ENCODE measurements at regions of chr1 and their contacts with region 1.

Region 1: GRCh38 chr1:206734499-206735142 is 36.0 kb upstream of the IL19 start:
- DNase-seq: peak in 1 of 2 experiments; percentile 94
- H3K4me3 ChIP-seq: no peak overlapping the region
- H3K27ac ChIP-seq: no peak overlapping the region
- H3K4me1 ChIP-seq: peaks cover 0 to 3% (median 0%) of the 10 kb centered on the region in 4 experiments; a peak in 2 of 7 replicates
- H3K27me3 ChIP-seq: no peaks in the 10 kb centered on the region
- CTCF ChIP-seq: peak; percentile 66 to 87 (median 86)
- EP300 ChIP-seq: no peak
- POLR2A ChIP-seq: no peak
- RAD21 ChIP-seq: peak; percentile 80 to 84

Region 2: DNA sequence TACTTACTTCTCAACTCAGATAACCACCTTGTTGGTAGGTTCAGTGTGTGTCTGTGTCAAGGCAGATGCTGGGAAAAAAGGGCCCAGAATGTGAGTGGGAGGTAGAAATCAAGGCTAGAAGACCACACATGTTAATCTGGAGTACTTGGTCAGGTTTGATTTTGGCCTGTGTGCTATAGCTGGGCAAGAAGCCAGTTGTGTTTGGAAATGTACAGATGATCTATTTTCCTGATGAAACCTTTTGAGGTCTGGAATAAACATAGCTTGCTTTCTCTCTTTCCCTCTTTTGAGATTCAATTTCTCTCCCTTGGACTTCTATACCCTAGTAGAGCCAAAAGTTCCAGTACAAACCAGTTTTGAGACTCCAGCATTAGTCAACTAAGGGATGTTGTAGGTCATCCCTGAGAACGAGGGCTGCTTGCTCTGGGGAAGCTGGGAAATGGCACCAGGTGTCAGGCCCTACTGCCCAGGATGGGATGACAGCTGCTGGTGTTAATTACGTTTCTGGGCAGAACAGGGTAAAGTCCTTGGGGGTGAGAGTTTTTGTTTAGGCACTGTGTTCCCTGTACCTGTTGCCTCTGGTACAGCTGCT is 34.1 kb before region 1 on chr1:
- CTCF ChIA-PET with region 1: interaction called, 17 read pairs
- POLR2A ChIA-PET with region 1: interaction called, 3 read pairs
- DNase-seq: no peak
- H3K4me3 ChIP-seq: no peak overlapping the region
- H3K27ac ChIP-seq: no peak overlapping the region
- H3K4me1 ChIP-seq: peaks cover 11 to 31% (median 24%) of the 10 kb centered on the region in 4 experiments
- H3K27me3 ChIP-seq: no peaks in the 10 kb centered on the region; a peak in 1 of 7 replicates
- CTCF ChIP-seq: no peak
- EP300 ChIP-seq: no peak
- POLR2A ChIP-seq: no peak
- RAD21 ChIP-seq: no peak

Region 3: GRCh38 chr1:206744683-206745082 is 10.1 kb after region 1 on chr1:
- CTCF ChIA-PET with region 1: interaction called, 24 read pairs
- POLR2A ChIA-PET with region 1: no interaction called
- DNase-seq: no peak
- H3K4me3 ChIP-seq: no peak overlapping the region
- H3K27ac ChIP-seq: no peak overlapping the region
- H3K4me1 ChIP-seq: no peaks in the 10 kb centered on the region
- H3K27me3 ChIP-seq: no peaks in the 10 kb centered on the region; a peak in 1 of 7 replicates
- CTCF ChIP-seq: no peak
- EP300 ChIP-seq: no peak
- POLR2A ChIP-seq: no peak
- RAD21 ChIP-seq: no peak

Region 4: DNA sequence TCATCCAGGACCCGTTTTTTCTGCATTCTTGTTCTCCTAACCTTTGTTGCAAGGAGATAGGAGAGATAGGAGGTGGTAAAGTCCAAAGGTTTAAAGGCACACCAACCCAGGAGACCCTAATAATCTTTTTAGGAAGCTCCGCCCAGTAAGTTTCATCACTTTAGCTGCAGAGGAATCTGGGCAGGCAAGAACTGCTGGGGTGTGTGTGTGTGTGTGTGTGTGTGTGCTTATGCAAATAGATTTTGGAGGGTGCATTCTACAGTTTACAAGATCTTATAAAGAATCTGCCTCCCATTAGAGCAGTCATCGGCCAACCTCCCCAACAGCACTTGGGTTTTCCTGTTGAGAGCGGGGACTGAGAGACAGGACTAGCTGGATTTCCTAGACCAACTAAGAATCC is 41.6 kb after region 1 on chr1:
- CTCF ChIA-PET with region 1: interaction called, 22 read pairs
- POLR2A ChIA-PET with region 1: no interaction called
- DNase-seq: no peak
- H3K4me3 ChIP-seq: no peak overlapping the region
- H3K27ac ChIP-seq: no peak overlapping the region
- H3K4me1 ChIP-seq: no peaks in the 10 kb centered on the region
- H3K27me3 ChIP-seq: no peaks in the 10 kb centered on the region
- CTCF ChIP-seq: no peak
- EP300 ChIP-seq: no peak
- POLR2A ChIP-seq: no peak
- RAD21 ChIP-seq: no peak

Region 5: DNA sequence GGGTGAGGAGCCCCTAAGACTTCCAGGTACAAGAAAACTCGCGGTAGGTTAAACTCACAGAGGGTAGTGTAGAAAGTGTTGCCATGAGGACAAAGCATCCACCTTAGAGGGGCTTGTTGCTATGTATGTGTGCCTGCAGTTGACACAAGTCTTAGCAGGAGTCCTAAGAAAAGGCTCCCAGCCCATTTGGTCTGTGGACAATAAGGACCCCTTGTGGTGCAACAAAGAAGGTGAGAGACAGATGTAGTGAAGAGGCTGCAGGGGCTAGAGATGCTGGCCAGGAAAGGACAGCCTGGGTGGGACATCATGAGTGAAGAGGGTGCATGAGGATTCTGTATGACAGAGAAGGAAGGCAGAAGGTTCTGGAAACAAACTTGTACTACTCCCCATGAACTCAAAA is 74.0 kb after region 1 on chr1:
- CTCF ChIA-PET with region 1: interaction called, 29 read pairs
- POLR2A ChIA-PET with region 1: no interaction called
- DNase-seq: no peak
- H3K4me3 ChIP-seq: no peak overlapping the region
- H3K27ac ChIP-seq: no peak overlapping the region
- H3K4me1 ChIP-seq: no peaks in the 10 kb centered on the region
- H3K27me3 ChIP-seq: no peaks in the 10 kb centered on the region
- CTCF ChIP-seq: peak; percentile 6 to 53 (median 44)
- EP300 ChIP-seq: no peak
- POLR2A ChIP-seq: no peak
- RAD21 ChIP-seq: peak; percentile 62 to 73

Region 6: GRCh38 chr1:206850401-206850800 is 115.8 kb after region 1 on chr1:
- CTCF ChIA-PET with region 1: no interaction called
- POLR2A ChIA-PET with region 1: no interaction called
- DNase-seq: no peak
- H3K4me3 ChIP-seq: no peak overlapping the region
- H3K27ac ChIP-seq: no peak overlapping the region
- H3K4me1 ChIP-seq: no peaks in the 10 kb centered on the region
- H3K27me3 ChIP-seq: no peaks in the 10 kb centered on the region
- CTCF ChIP-seq: no peak
- EP300 ChIP-seq: no peak
- POLR2A ChIP-seq: no peak
- RAD21 ChIP-seq: no peak

Region 7: GRCh38 chr1:206982216-206982615 is 247.6 kb after region 1 on chr1:
- CTCF ChIA-PET with region 1: interaction called, 44 read pairs
- POLR2A ChIA-PET with region 1: no interaction called
- DNase-seq: peak in 1 of 2 experiments; percentile 65
- H3K4me3 ChIP-seq: no peak overlapping the region
- H3K27ac ChIP-seq: no peak overlapping the region
- H3K4me1 ChIP-seq: peaks cover 4 to 15% (median 8%) of the 10 kb centered on the region in 4 experiments
- H3K27me3 ChIP-seq: no peaks in the 10 kb centered on the region; a peak in 1 of 7 replicates
- CTCF ChIP-seq: peak; percentile 49 to 86 (median 76)
- EP300 ChIP-seq: no peak
- POLR2A ChIP-seq: no peak
- RAD21 ChIP-seq: peak; percentile 88 to 92

Measured in H1 (cell line).